IMR-90 (cell line): ENCODE measurements at regions of chr16 and their contacts with region 1.

Region 1: DNA sequence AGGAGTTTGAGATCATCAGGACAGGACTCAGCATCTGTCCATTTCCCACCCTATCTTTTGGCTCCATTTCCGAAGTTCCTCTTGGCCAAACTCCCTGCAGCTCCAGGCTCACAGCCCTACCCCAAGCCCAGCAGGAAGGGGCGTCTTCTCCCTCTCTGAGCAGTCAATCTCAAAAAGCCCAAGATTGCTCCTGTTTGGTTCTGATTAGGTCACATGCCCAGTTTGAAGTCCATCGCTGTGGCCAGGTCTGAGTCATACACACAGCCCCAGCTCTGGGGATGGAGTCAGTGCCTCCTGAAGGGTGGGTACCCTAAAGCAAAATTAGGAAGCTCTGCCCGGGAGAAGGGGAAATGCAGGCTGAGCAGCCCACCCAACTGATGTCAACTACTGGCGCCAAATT is 23.9 kb downstream of the SNX20 start:
- DNase-seq: no peak
- ATAC-seq: no peak
- H3K4me3 ChIP-seq: no peak overlapping the region
- H3K27ac ChIP-seq: no peak overlapping the region
- H3K4me1 ChIP-seq: no peaks in the 10 kb centered on the region
- H3K27me3 ChIP-seq: peaks cover 6% of the 10 kb centered on the region; the same call in 1 of the 2 replicates
- CTCF ChIP-seq: no peak
- POLR2A ChIP-seq: no peak
- RAD21 ChIP-seq: no peak

Region 2: DNA sequence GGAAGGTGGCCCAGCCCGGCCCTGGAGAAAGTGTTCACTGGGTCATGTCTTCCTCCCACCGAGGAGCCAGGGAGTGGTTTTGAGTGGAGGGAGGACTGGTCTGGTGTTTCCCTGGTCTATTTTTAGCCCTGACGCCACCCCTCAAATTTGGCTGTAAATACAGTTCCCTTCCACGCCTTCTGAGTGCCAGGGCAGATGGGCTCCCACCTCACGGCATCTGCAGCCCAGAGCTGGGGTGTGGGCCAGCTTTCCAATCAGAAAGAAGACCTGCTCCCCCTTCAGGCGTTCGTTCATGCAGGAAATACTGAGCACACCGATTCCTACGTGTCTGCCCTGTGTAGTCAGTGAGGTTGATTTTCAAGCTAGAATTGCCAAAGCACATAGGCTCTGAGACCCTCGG is 29.8 kb before region 1 on chr16:
- CTCF ChIA-PET with region 1: no interaction called
- POLR2A ChIA-PET with region 1: no interaction called
- dilution Hi-C with region 1: no loop called
- in situ Hi-C with region 1: no loop called
- intact Hi-C with region 1: no loop called
- DNase-seq: no peak
- ATAC-seq: no peak
- H3K4me3 ChIP-seq: no peak overlapping the region
- H3K27ac ChIP-seq: no peak overlapping the region
- H3K4me1 ChIP-seq: no peaks in the 10 kb centered on the region
- H3K27me3 ChIP-seq: peaks cover 2% of the 10 kb centered on the region; the same call in 1 of the 2 replicates
- CTCF ChIP-seq: no peak
- POLR2A ChIP-seq: no peak
- RAD21 ChIP-seq: no peak

Region 3: GRCh38 chr16:51691109-51691508 is 1033.9 kb after region 1 on chr16:
- CTCF ChIA-PET with region 1: no interaction called
- POLR2A ChIA-PET with region 1: interaction called, 15 read pairs
- dilution Hi-C with region 1: no loop called
- in situ Hi-C with region 1: no loop called
- intact Hi-C with region 1: no loop called
- DNase-seq: no peak
- ATAC-seq: no peak
- H3K4me3 ChIP-seq: no peak overlapping the region
- H3K27ac ChIP-seq: no peak overlapping the region
- H3K4me1 ChIP-seq: no peaks in the 10 kb centered on the region
- H3K27me3 ChIP-seq: no peaks in the 10 kb centered on the region
- CTCF ChIP-seq: no peak
- POLR2A ChIP-seq: no peak
- RAD21 ChIP-seq: no peak